Colonic mucosa (tissue), 4 donors: ENCODE measurements at regions of chr5 and their contacts with region 1.

Region 1: DNA sequence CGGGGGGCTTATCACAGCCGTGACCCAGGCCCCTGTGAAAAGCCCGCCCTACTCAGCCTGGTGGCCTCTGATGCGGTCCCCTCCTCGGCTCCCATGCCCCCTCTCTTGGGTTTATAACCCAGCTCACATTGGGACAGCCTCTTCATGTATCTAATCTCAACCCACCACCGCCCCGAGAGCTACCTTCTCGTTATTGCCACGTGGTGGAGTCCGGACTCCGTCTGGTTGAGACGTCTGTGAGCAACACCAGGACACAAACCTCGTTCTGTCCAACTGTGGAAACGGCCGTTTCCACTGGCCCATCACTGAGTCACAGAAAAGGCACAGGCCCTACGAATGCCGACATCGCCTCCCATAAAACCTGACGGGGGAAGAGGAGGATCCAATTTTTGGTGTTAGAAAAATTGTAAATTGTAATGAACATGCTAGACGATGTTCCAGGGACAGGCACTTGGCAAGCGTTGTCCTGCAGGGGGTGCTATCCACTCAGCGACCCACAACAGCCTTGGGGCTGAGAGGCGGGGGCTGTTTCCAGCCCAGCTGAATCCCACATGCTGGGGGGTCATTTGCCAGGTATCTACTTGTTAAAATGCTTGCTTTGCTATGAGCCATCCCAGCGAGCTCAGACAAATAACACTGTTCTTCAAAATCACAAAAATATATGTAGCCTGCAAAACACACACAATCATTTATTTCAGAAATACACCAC is 37.3 kb upstream of the N4BP3 start:
- DNase-seq: peak; percentile 79
- H3K4me3 ChIP-seq: no peak overlapping the region
- H3K27ac ChIP-seq: no peak overlapping the region
- H3K4me1 ChIP-seq: no peaks in the 10 kb centered on the region
- H3K27me3 ChIP-seq: no peaks in the 10 kb centered on the region
- CTCF ChIP-seq: peak; percentile 83

Region 2: GRCh38 chr5:178146020-178146820 is 70.2 kb after region 1 on chr5:
- intact Hi-C with region 1: loop called (anchors 5 kb)
- DNase-seq: peak; percentile 77
- H3K4me3 ChIP-seq: no peak overlapping the region
- H3K27ac ChIP-seq: no peak overlapping the region
- H3K4me1 ChIP-seq: no peaks in the 10 kb centered on the region
- H3K27me3 ChIP-seq: no peaks in the 10 kb centered on the region
- CTCF ChIP-seq: peak; percentile 70

Region 3: GRCh38 chr5:178163772-178164735 is 88.1 kb after region 1 on chr5:
- intact Hi-C with region 1: loop called (anchors 2 kb)
- DNase-seq: peak; percentile 91
- H3K4me3 ChIP-seq: no peak overlapping the region
- H3K27ac ChIP-seq: no peak overlapping the region
- H3K4me1 ChIP-seq: no peaks in the 10 kb centered on the region
- H3K27me3 ChIP-seq: no peaks in the 10 kb centered on the region
- CTCF ChIP-seq: peak; percentile 99